ENCODE measurements at regions of chr3 and their contacts with region 1.

Region 1: DNA sequence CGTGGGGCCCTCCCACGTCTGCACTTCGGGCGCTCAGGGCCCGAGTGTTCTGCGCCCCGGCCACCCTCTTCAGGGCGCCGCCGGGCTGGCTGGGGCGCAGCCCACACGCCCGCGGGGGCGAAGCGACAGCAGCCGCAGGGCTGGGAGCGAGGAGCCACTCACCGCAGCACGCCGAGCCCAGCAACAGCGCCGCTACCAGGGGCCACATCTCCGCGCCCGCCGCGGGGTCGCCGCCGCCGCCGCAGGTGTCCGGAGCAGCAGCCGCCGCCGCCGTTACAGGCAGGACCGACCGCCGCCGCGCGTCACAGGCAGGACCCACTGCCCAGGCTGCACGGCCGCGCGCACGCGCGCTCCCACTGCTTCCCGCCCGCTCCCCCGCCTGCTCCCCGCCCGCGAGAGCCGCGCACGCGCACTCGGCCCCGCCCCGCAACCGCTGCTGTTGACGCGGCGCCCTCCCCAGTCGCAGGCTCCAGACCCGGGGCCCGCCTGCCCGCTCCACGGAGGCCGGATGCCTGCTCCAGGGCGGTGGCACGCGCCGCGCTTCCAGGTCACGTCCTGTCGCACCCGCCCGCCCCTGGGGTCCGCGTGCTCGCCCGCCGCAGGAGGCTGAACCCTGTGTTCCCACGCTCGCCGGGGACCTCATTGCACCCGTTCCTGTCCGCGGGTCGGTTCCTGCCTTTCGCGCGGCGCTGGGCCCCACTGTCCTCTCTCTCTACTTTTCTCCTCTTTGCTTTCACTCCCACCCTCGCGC is at the start of gene CD47:
- DNase-seq: peak; percentile 97
- ATAC-seq: peak; percentile 63
- H3K4me3 Mint-ChIP-seq: no peak within 1 kb of the TSS
- H3K27ac Mint-ChIP-seq: peak within 1 kb of the TSS; percentile 100
- H3K4me1 Mint-ChIP-seq: peaks cover 31% of the 10 kb centered on the region
- H3K27me3 Mint-ChIP-seq: no peaks in the 10 kb centered on the region
- total RNA-seq, gene CD47: 58.6 to 104 TPM

Region 2: DNA sequence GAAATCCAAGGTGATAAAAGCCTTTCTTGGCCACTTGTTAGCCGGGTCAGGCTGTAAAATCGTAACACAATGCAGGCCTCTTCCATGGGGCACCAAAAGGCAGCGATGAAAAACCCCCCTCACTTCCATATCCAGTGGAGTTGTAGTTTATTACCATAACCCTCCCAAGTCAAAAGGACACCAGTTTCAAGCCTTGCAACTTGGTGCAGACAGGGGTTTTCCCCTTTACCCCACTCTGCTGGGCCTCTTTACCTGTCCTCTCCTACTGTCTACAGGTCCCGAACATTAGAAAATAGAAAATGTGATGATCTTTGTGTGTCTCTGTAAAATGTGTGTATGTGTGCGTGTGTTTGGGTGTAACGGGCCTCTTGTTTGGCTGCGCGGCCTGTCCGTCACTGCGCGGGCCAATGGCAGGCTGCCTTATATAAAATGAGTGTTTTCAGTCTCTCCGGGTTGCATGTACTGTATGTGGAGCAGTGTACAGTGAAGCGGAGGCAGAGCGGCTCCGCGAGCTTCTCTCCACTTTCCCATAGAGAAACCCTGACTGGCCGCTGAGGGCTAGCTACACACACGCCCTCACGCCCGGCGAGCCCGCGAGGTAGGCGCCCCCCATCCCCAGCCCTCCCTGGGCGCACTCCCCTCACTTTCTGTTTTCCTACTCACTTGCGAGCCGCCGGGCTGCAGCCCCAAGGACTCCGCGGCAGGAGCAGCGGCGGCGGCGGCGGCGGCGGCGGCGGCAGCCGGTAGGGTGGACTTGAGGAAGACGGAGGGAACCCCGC is 568.2 kb before region 1 on chr3 and contains the start of gene BBX:
- CTCF ChIA-PET with region 1: no interaction called
- POLR2A ChIA-PET with region 1: no interaction called
- intact Hi-C with region 1: loop called in 1 of 2 experiments (anchors 5 kb)
- DNase-seq: peak; percentile 91
- ATAC-seq: peak; percentile 93
- H3K4me3 Mint-ChIP-seq: peak within 1 kb of the TSS; percentile 97
- H3K27ac Mint-ChIP-seq: peak within 1 kb of the TSS; percentile 95
- H3K4me1 Mint-ChIP-seq: peaks cover 25% of the 10 kb centered on the region
- H3K27me3 Mint-ChIP-seq: no peaks in the 10 kb centered on the region
- total RNA-seq, gene BBX: 38.9 to 63.4 TPM

Region 3: DNA sequence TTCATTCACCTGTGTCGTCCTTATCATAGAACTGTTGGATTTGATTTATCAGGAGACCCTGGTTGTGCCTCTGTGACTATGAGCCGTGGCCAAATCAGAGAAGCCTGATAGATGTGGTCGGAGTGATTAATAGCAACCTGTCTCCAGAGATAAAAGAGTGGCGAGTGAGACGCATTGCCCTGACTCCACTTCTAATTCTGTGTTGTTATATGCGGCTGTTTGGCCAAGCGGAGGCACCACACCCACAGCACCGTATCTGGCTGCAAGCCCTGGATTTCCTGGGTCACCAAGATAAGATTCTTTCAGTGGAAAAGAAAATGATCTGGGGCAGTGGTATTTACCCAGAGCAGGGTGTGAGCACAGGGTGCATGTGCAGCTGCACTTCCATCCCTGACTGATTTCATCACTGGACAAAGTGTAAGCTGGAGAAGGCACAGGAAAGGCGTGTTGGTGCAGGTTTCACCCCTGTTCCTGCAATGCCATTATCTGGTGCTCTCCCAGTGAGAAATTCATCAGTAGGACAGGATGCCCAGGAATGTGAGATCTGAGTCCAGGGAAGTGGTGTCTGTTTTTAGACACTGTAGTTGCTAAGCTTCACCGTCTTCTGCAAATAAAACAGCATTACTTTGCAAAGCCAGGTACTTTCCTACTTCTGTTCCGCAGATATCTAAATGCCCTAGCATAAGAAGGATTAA is 84.7 kb before region 1 on chr3:
- CTCF ChIA-PET with region 1: no interaction called
- POLR2A ChIA-PET with region 1: no interaction called
- intact Hi-C with region 1: no loop called
- DNase-seq: no peak
- ATAC-seq: no peak
- H3K4me3 Mint-ChIP-seq: no peak overlapping the region
- H3K27ac Mint-ChIP-seq: no peak overlapping the region
- H3K4me1 Mint-ChIP-seq: peaks cover 4% of the 10 kb centered on the region
- H3K27me3 Mint-ChIP-seq: peaks cover 5% of the 10 kb centered on the region

Region 4: GRCh38 chr3:108079877-108080659 is 10.8 kb before region 1 on chr3:
- CTCF ChIA-PET with region 1: interaction called, 10 read pairs
- POLR2A ChIA-PET with region 1: no interaction called
- intact Hi-C with region 1: loop called in 1 of 2 experiments (anchors 2 kb)
- DNase-seq: no peak
- ATAC-seq: peak; percentile 71
- H3K4me3 Mint-ChIP-seq: peak overlapping the region; percentile 23
- H3K27ac Mint-ChIP-seq: peak overlapping the region; percentile 23
- H3K4me1 Mint-ChIP-seq: peaks cover 26% of the 10 kb centered on the region
- H3K27me3 Mint-ChIP-seq: no peaks in the 10 kb centered on the region

Region 5: GRCh38 chr3:108124337-108125152 is 33.7 kb after region 1 on chr3:
- CTCF ChIA-PET with region 1: interaction called, 6 read pairs
- POLR2A ChIA-PET with region 1: interaction called, 78 read pairs
- intact Hi-C with region 1: loop called (anchors 1 kb)
- DNase-seq: peak; percentile 82
- ATAC-seq: peak; percentile 70
- H3K4me3 Mint-ChIP-seq: peak overlapping the region; percentile 93
- H3K27ac Mint-ChIP-seq: peak overlapping the region; percentile 96
- H3K4me1 Mint-ChIP-seq: peaks cover 62% of the 10 kb centered on the region
- H3K27me3 Mint-ChIP-seq: no peaks in the 10 kb centered on the region

Region 6: DNA sequence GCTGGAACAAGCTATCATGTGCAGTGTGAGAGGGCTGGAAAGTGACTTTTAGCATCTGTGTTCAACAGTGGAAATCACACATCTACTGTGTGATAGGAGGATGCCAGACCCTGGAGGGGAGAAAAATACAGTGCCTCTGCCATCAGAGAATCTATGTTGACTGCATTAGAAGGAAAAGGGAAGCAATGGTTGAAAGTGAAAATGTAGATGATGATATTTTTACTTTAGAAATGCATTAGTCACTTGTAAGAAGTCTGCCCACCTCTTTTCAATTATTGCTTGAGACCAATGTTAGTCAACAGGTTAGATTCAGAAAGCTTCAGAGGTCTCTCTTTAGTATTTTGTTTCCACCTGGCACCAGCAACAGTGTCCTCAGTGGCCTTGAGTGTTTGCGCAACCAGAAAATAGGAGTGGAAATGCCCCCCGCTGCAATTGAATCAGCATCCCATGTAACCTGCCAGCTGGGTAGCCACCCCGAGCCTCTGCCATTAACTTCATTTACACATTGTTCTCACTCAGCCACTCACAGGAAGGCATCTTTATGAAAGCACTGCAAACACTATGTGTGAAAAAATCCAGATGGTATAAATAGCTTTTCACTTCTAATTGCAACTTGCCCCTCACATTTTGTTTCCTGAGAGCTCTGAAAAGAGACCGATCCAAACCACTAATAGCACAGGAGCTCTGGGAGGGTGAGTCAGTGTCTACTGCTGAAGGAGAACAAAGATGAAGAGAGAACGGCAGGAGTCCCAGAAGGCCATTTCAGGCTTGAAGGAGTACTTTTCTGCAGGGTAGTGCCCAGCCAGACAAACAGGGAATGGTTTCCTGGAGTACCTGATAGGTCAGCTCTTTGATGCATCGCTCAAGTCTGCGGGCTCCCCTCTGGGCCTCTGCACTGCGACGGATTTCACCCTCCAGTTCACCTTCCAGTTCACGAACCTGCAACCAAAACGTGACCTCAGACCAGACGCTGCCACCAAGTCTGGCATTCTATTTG is 297.6 kb after region 1 on chr3:
- CTCF ChIA-PET with region 1: no interaction called
- POLR2A ChIA-PET with region 1: interaction called, 3 read pairs
- intact Hi-C with region 1: loop called in 1 of 2 experiments (anchors 5 kb)
- DNase-seq: peak; percentile 29
- ATAC-seq: peak; percentile 90
- H3K4me3 Mint-ChIP-seq: no peak overlapping the region
- H3K27ac Mint-ChIP-seq: peak overlapping the region; percentile 8
- H3K4me1 Mint-ChIP-seq: peaks cover 25% of the 10 kb centered on the region
- H3K27me3 Mint-ChIP-seq: peaks cover 15% of the 10 kb centered on the region

Region 7: GRCh38 chr3:108835101-108835500 is 744.2 kb after region 1 on chr3:
- CTCF ChIA-PET with region 1: no interaction called
- POLR2A ChIA-PET with region 1: no interaction called
- intact Hi-C with region 1: loop called (anchors 2 to 10 kb)
- DNase-seq: peak; percentile 63
- ATAC-seq: peak; percentile 67
- H3K4me3 Mint-ChIP-seq: peak overlapping the region; percentile 74
- H3K27ac Mint-ChIP-seq: peak overlapping the region; percentile 92
- H3K4me1 Mint-ChIP-seq: peaks cover 84% of the 10 kb centered on the region
- H3K27me3 Mint-ChIP-seq: no peaks in the 10 kb centered on the region